Mammary epithelial cell (primary cell): ENCODE measurements at regions of chr11 and their contacts with region 1.

Region 1: GRCh38 chr11:104968355-104968855 is at the start of gene CASP4:
- DNase-seq: peak; percentile 71
- H3K4me3 ChIP-seq: peak within 1 kb of the TSS; percentile 49 to 76 (median 72)
- H3K27ac ChIP-seq: peak within 1 kb of the TSS; percentile 86
- H3K4me1 ChIP-seq: peaks cover 26% of the 10 kb centered on the region
- H3K27me3 ChIP-seq: no peaks in the 10 kb centered on the region
- CTCF ChIP-seq: no peak
- total RNA-seq, gene CASP4: 76.6 to 190 TPM

Region 2: DNA sequence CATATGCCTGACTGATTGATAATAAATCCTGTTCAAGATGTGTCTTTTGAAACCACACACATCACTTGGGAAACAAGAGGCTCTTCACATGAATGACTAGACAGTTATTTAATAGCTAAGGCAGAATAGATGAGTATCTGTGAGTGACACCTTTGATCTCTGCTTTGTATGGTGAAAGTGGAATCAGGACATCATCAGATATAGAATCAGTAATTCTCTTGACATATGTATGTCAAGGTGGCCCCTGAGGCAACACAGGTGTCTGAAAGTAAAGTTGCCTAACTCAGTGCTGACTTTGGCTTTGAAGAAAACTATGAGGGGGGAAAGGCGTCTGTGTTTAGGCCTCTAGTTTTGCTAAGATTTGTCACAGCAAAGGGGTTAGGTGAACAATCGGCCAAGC is 11.4 kb after region 1 on chr11:
- CTCF ChIA-PET with region 1: no interaction called
- dilution Hi-C with region 1: no loop called
- in situ Hi-C with region 1: no loop called
- intact Hi-C with region 1: no loop called
- DNase-seq: no peak
- H3K4me3 ChIP-seq: no peak overlapping the region
- H3K27ac ChIP-seq: no peak overlapping the region
- H3K4me1 ChIP-seq: no peaks in the 10 kb centered on the region
- H3K27me3 ChIP-seq: no peaks in the 10 kb centered on the region
- CTCF ChIP-seq: no peak

Region 3: GRCh38 chr11:105137286-105137685 is 168.9 kb after region 1 on chr11:
- CTCF ChIA-PET with region 1: no interaction called
- dilution Hi-C with region 1: no loop called
- in situ Hi-C with region 1: no loop called
- intact Hi-C with region 1: loop called (anchors 5 kb)
- DNase-seq: peak; percentile 46
- H3K4me3 ChIP-seq: no peak overlapping the region
- H3K27ac ChIP-seq: peak overlapping the region; percentile 38
- H3K4me1 ChIP-seq: peaks cover 25% of the 10 kb centered on the region
- H3K27me3 ChIP-seq: no peaks in the 10 kb centered on the region
- CTCF ChIP-seq: no peak

Region 4: DNA sequence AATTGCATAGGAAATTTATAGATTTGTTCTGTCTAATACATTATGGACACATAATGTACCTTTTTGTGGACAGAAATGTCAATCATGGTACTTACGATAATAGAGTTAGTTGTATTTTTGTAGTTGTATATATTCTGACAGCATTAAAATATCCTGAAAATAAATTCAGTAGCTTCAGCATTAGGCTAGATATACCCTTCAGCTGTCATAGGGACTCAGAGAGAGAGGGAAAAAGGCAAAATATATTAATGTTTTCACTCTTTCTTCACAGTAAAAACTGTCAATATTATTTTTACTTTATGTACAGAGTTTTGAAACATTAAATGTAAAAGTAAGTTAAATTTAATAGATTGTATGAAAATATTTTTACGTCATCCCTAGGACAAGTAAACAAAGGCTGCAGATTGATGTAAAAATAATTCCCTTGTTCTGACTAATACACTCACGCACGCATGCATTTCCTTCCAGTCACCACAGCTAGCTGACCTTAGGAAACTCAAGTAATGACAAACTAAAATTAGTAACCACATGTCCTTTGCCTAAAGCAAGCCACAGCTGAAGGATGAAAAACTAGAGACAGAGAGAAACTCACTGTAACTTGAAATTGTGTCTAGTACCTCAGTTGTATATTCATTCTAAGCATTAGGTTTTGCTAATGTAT is 275.9 kb after region 1 on chr11:
- CTCF ChIA-PET with region 1: no interaction called
- dilution Hi-C with region 1: no loop called
- in situ Hi-C with region 1: no loop called
- intact Hi-C with region 1: loop called (anchors 5 kb)
- DNase-seq: peak; percentile 79
- H3K4me3 ChIP-seq: no peak overlapping the region
- H3K27ac ChIP-seq: no peak overlapping the region
- H3K4me1 ChIP-seq: peaks cover 6% of the 10 kb centered on the region
- H3K27me3 ChIP-seq: no peaks in the 10 kb centered on the region
- CTCF ChIP-seq: no peak